Caco-2 (cell line): ENCODE measurements at regions of chr2 and their contacts with region 1.

Region 1: DNA sequence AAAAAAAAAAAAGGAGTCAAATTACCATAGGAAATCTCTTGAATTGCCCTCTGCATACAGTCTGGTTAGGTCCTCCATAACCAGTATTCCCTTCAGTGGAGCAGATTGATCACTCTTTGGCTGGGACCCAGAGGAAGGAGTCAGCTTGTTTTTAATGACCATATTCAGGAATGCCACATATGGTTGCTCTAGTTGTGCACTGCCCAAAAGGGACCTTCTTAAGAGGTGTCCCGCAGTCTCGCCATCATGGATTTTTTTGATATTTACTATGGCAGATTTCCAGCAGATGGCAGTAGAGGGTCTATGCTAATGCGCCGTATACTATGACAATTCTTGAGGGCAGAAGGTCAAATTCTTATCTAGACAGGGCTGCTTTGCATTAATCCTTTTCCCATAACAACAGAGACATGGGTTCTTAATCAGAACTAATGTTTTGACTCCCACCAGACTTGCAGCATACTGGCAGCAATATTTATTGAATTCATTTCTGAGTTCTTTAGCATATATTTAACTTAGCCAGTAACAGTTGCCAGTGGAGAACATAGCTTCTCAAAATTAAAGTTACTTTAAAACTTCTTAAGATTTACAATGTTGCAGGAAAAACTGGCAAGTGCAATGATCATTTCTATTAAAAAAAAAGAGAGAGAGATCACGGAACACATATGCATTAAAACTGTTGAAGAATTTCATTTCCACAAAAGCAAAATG is 31.8 kb upstream of the INPP4A start:
- DNase-seq: peak in 1 of 2 experiments; percentile 83
- H3K4me3 ChIP-seq: no peak overlapping the region
- H3K4me3 Mint-ChIP-seq: no peak overlapping the region
- H3K27ac Mint-ChIP-seq: no peak overlapping the region
- H3K4me1 ChIP-seq: 0 out of 2 replicates have a peak, but pooled peaks cover 3% of the 10 kb centered on the region
- H3K4me1 Mint-ChIP-seq: peaks cover 4% of the 10 kb centered on the region
- H3K27me3 ChIP-seq: no peaks in the 10 kb centered on the region
- H3K27me3 Mint-ChIP-seq: no peaks in the 10 kb centered on the region
- CTCF ChIP-seq: peak; percentile 71 to 76

Region 2: GRCh38 chr2:98263362-98263761 is 149.5 kb before region 1 on chr2:
- CTCF ChIA-PET with region 1: no interaction called
- POLR2A ChIA-PET with region 1: no interaction called
- intact Hi-C with region 1: no loop called
- DNase-seq: no peak
- H3K4me3 ChIP-seq: no peak overlapping the region
- H3K4me3 Mint-ChIP-seq: no peak overlapping the region
- H3K27ac Mint-ChIP-seq: no peak overlapping the region
- H3K4me1 ChIP-seq: no peaks in the 10 kb centered on the region
- H3K4me1 Mint-ChIP-seq: no peaks in the 10 kb centered on the region
- H3K27me3 ChIP-seq: no peaks in the 10 kb centered on the region
- H3K27me3 Mint-ChIP-seq: peaks cover 7% of the 10 kb centered on the region
- CTCF ChIP-seq: no peak

Region 3: DNA sequence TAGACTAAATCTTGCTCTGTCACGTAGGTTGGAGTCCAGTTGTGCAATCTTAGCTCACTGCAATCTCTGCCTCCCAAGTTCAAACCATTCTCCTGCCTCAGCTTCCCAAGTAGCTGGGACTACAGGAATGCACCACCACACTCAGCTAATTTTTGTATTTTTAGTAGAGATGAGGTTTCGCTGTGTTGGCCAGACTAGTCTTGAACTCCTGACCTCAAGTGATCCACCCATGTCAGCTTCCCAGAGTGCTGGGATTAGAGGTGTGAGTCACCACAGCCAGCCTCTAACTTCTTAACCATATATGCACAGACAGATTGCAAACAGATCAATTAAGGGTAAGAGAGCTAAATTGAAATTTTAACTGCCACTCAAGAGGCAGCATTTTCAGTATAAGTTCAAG is 88.7 kb before region 1 on chr2:
- CTCF ChIA-PET with region 1: no interaction called
- POLR2A ChIA-PET with region 1: no interaction called
- intact Hi-C with region 1: no loop called
- DNase-seq: no peak
- H3K4me3 ChIP-seq: no peak overlapping the region
- H3K4me3 Mint-ChIP-seq: no peak overlapping the region
- H3K27ac Mint-ChIP-seq: no peak overlapping the region
- H3K4me1 ChIP-seq: no peaks in the 10 kb centered on the region
- H3K4me1 Mint-ChIP-seq: no peaks in the 10 kb centered on the region
- H3K27me3 ChIP-seq: no peaks in the 10 kb centered on the region
- H3K27me3 Mint-ChIP-seq: peaks cover 4% of the 10 kb centered on the region
- CTCF ChIP-seq: no peak

Region 4: GRCh38 chr2:98444436-98445176 is 31.7 kb after region 1 on chr2 and contains the start of gene INPP4A:
- CTCF ChIA-PET with region 1: no interaction called
- POLR2A ChIA-PET with region 1: no interaction called
- intact Hi-C with region 1: loop called (anchors 1 kb)
- DNase-seq: peak; percentile 83 to 89
- H3K4me3 ChIP-seq: peak within 1 kb of the TSS; percentile 78
- H3K4me3 Mint-ChIP-seq: peak within 1 kb of the TSS; percentile 82
- H3K27ac Mint-ChIP-seq: peak within 1 kb of the TSS; percentile 76
- H3K4me1 ChIP-seq: peaks cover 44% of the 10 kb centered on the region
- H3K4me1 Mint-ChIP-seq: peaks cover 15% of the 10 kb centered on the region
- H3K27me3 ChIP-seq: no peaks in the 10 kb centered on the region
- H3K27me3 Mint-ChIP-seq: no peaks in the 10 kb centered on the region
- CTCF ChIP-seq: no peak
- total RNA-seq, gene INPP4A: 24.9 and 26.3 TPM in 2 replicates

Region 5: GRCh38 chr2:98518090-98518489 is 105.2 kb after region 1 on chr2:
- CTCF ChIA-PET with region 1: no interaction called
- POLR2A ChIA-PET with region 1: no interaction called
- intact Hi-C with region 1: loop called (anchors 1 kb)
- DNase-seq: peak in 1 of 2 experiments; percentile 26
- H3K4me3 ChIP-seq: no peak overlapping the region
- H3K4me3 Mint-ChIP-seq: no peak overlapping the region
- H3K27ac Mint-ChIP-seq: no peak overlapping the region
- H3K4me1 ChIP-seq: no peaks in the 10 kb centered on the region
- H3K4me1 Mint-ChIP-seq: no peaks in the 10 kb centered on the region
- H3K27me3 ChIP-seq: no peaks in the 10 kb centered on the region
- H3K27me3 Mint-ChIP-seq: no peaks in the 10 kb centered on the region
- CTCF ChIP-seq: peak; percentile 17 to 50

Region 6: GRCh38 chr2:98556344-98557033 is 143.6 kb after region 1 on chr2:
- CTCF ChIA-PET with region 1: no interaction called
- POLR2A ChIA-PET with region 1: no interaction called
- intact Hi-C with region 1: loop called (anchors 10 kb)
- DNase-seq: peak in 1 of 2 experiments; percentile 11
- H3K4me3 ChIP-seq: no peak overlapping the region
- H3K4me3 Mint-ChIP-seq: no peak overlapping the region
- H3K27ac Mint-ChIP-seq: no peak overlapping the region
- H3K4me1 ChIP-seq: no peaks in the 10 kb centered on the region
- H3K4me1 Mint-ChIP-seq: no peaks in the 10 kb centered on the region
- H3K27me3 ChIP-seq: no peaks in the 10 kb centered on the region
- H3K27me3 Mint-ChIP-seq: no peaks in the 10 kb centered on the region
- CTCF ChIP-seq: no peak

Region 7: GRCh38 chr2:98601532-98602132 is 188.7 kb after region 1 on chr2:
- CTCF ChIA-PET with region 1: no interaction called
- POLR2A ChIA-PET with region 1: no interaction called
- intact Hi-C with region 1: loop called (anchors 1 kb)
- DNase-seq: peak; percentile 58 to 64
- H3K4me3 ChIP-seq: no peak overlapping the region
- H3K4me3 Mint-ChIP-seq: no peak overlapping the region
- H3K27ac Mint-ChIP-seq: no peak overlapping the region
- H3K4me1 ChIP-seq: no peaks in the 10 kb centered on the region; the same call in 1 of the 2 replicates
- H3K4me1 Mint-ChIP-seq: peaks cover 3% of the 10 kb centered on the region
- H3K27me3 ChIP-seq: no peaks in the 10 kb centered on the region
- H3K27me3 Mint-ChIP-seq: no peaks in the 10 kb centered on the region
- CTCF ChIP-seq: peak; percentile 81 to 86

Region 8: DNA sequence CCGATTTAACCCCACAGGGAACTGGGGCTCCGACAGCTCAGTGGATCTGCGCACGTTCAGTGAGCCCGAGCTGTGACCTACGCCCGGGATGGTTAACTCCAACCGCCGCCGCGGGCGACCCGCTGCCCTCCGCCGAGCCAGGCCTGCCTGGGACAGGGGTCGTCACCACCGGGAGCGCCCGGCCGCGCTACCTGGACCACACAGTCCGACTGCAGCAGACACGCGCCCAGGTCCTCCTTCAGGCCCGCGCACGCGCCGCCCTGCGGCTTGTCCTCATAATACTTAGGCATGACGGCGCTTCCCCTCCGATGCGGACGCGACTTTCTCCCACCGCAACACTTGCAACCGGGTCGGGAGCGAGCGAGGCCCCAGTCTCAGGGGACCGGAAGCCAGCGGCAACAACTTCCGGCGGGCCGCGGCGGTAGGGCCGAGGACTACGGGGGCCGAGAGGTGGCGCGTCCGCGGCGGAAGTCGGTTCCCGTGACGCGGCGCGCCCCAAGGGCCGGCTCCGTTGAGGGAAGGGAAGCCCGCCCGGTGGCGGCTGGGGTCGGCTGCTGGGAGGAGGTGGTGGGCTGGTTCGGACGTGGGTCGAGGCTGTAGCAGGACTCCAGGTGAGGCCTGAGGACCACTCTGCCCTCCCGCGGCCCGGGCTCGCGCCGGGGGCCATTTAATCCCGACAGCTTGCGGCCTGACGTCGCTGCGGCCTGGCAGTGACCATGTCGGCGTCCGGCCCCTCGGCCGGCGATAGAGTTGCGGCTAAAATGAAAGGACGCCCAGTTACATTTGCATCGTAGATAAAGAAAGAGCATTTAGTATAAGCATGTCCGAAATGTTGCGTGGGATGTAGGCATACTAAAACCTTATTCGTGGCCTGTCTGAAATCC is 195.5 kb after region 1 on chr2 and contains the starts of genes COA5 and UNC50:
- CTCF ChIA-PET with region 1: no interaction called
- POLR2A ChIA-PET with region 1: no interaction called
- intact Hi-C with region 1: loop called (anchors 2 kb)
- DNase-seq: peak; percentile 90 to 94
- H3K4me3 ChIP-seq: peak within 1 kb of the TSS; percentile 78
- H3K4me3 Mint-ChIP-seq: peak within 1 kb of the TSS; percentile 86
- H3K27ac Mint-ChIP-seq: peak within 1 kb of the TSS; percentile 82
- H3K4me1 ChIP-seq: peaks cover 5% of the 10 kb centered on the region
- H3K4me1 Mint-ChIP-seq: peaks cover 22% of the 10 kb centered on the region
- H3K27me3 ChIP-seq: no peaks in the 10 kb centered on the region
- H3K27me3 Mint-ChIP-seq: no peaks in the 10 kb centered on the region
- CTCF ChIP-seq: peak in 1 of 2 experiments; percentile 9
- total RNA-seq, gene COA5: 35.7 TPM in 2 replicates
- total RNA-seq, gene UNC50: 39.7 and 40.0 TPM in 2 replicates